Activated CD8-positive, alpha-beta memory T cell treated with anti-CD3 and anti-CD28 coated beads, Interleukin-2, amount 10 ng/mL, durations not matched to agents 7 days and 5 days (primary cell): ENCODE measurements at regions of chr16 and their contacts with region 1.

Region 1: GRCh38 chr16:48542020-48542473 is 67.9 kb downstream of the N4BP1 start:
- DNase-seq: no peak
- ATAC-seq: no peak
- H3K4me3 Mint-ChIP-seq: no peak overlapping the region
- H3K27ac Mint-ChIP-seq: no peak overlapping the region
- H3K4me1 Mint-ChIP-seq: peaks cover 19% of the 10 kb centered on the region
- H3K27me3 Mint-ChIP-seq: no peaks in the 10 kb centered on the region

Region 2: GRCh38 chr16:48432136-48432535 is 109.9 kb before region 1 on chr16:
- CTCF ChIA-PET with region 1: no interaction called
- DNase-seq: no peak
- ATAC-seq: no peak
- H3K4me3 Mint-ChIP-seq: no peak overlapping the region
- H3K27ac Mint-ChIP-seq: no peak overlapping the region
- H3K4me1 Mint-ChIP-seq: peaks cover 16% of the 10 kb centered on the region
- H3K27me3 Mint-ChIP-seq: no peaks in the 10 kb centered on the region

Region 3: GRCh38 chr16:48511071-48511540 is 30.9 kb before region 1 on chr16:
- CTCF ChIA-PET with region 1: no interaction called
- DNase-seq: no peak
- ATAC-seq: no peak
- H3K4me3 Mint-ChIP-seq: no peak overlapping the region
- H3K27ac Mint-ChIP-seq: no peak overlapping the region
- H3K4me1 Mint-ChIP-seq: no peaks in the 10 kb centered on the region
- H3K27me3 Mint-ChIP-seq: peaks cover 6% of the 10 kb centered on the region

Region 4: DNA sequence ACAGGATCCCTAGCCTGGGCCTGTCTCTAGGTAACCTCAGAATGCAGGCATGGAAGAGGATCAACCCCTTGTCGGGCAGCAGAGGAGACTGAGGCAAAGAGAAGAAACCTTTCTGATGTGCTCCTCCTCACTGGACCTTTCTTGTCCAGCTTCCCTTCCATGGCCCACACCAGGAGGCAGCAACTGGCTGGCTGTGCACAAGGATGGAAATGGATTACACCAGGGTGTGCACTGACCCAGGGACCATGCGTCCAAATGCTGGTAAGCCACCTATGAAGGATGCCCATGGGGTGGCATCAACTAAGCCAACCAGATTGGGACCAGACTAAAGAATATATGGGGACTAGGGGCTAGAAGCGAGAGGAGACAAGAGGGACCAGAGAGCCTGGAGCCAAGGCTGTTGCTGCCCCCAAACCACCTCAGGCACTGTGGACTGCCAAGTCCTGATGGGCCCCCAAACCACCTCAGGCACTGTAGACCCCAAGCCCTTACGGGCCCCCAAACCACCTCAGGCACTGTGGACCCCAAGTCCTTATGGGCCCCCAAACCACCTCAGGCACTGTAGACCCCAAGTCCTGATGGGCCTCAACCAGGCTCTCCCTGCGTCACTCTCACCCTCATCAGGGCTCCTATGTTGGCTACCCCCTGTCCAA is 15.0 kb before region 1 on chr16:
- CTCF ChIA-PET with region 1: interaction called, 10 read pairs
- DNase-seq: no peak
- ATAC-seq: no peak
- H3K4me3 Mint-ChIP-seq: no peak overlapping the region
- H3K27ac Mint-ChIP-seq: no peak overlapping the region
- H3K4me1 Mint-ChIP-seq: peaks cover 6% of the 10 kb centered on the region
- H3K27me3 Mint-ChIP-seq: no peaks in the 10 kb centered on the region

Region 5: GRCh38 chr16:48583075-48584065 is 41.3 kb after region 1 on chr16:
- CTCF ChIA-PET with region 1: no interaction called
- DNase-seq: no peak
- ATAC-seq: no peak
- H3K4me3 Mint-ChIP-seq: no peak overlapping the region
- H3K27ac Mint-ChIP-seq: no peak overlapping the region
- H3K4me1 Mint-ChIP-seq: peaks cover 15% of the 10 kb centered on the region
- H3K27me3 Mint-ChIP-seq: no peaks in the 10 kb centered on the region

Region 6: GRCh38 chr16:48704710-48705109 is 162.7 kb after region 1 on chr16:
- CTCF ChIA-PET with region 1: no interaction called
- DNase-seq: no peak
- ATAC-seq: no peak
- H3K4me3 Mint-ChIP-seq: no peak overlapping the region
- H3K27ac Mint-ChIP-seq: no peak overlapping the region
- H3K4me1 Mint-ChIP-seq: no peaks in the 10 kb centered on the region
- H3K27me3 Mint-ChIP-seq: no peaks in the 10 kb centered on the region